ENCODE measurements at regions of chr2 and their contacts with region 1.

Region 1: GRCh38 chr2:11743846-11744553 is 2.4 kb upstream of the LPIN1 start:
- DNase-seq: peak; percentile 96
- H3K4me3 ChIP-seq: no peak overlapping the region
- H3K27ac ChIP-seq: peak overlapping the region; percentile 64
- H3K4me1 ChIP-seq: peaks cover 16% of the 10 kb centered on the region
- H3K27me3 ChIP-seq: no peaks in the 10 kb centered on the region
- CTCF ChIP-seq: no peak

Region 2: GRCh38 chr2:11598228-11598731 is 145.7 kb before region 1 on chr2:
- intact Hi-C with region 1: no loop called
- DNase-seq: no peak
- H3K4me3 ChIP-seq: no peak overlapping the region
- H3K27ac ChIP-seq: no peak overlapping the region
- H3K4me1 ChIP-seq: no peaks in the 10 kb centered on the region
- H3K27me3 ChIP-seq: no peaks in the 10 kb centered on the region
- CTCF ChIP-seq: no peak

Region 3: GRCh38 chr2:11621410-11621809 is 122.6 kb before region 1 on chr2:
- intact Hi-C with region 1: no loop called
- DNase-seq: no peak
- H3K4me3 ChIP-seq: no peak overlapping the region
- H3K27ac ChIP-seq: no peak overlapping the region
- H3K4me1 ChIP-seq: no peaks in the 10 kb centered on the region
- H3K27me3 ChIP-seq: no peaks in the 10 kb centered on the region
- CTCF ChIP-seq: no peak

Region 4: DNA sequence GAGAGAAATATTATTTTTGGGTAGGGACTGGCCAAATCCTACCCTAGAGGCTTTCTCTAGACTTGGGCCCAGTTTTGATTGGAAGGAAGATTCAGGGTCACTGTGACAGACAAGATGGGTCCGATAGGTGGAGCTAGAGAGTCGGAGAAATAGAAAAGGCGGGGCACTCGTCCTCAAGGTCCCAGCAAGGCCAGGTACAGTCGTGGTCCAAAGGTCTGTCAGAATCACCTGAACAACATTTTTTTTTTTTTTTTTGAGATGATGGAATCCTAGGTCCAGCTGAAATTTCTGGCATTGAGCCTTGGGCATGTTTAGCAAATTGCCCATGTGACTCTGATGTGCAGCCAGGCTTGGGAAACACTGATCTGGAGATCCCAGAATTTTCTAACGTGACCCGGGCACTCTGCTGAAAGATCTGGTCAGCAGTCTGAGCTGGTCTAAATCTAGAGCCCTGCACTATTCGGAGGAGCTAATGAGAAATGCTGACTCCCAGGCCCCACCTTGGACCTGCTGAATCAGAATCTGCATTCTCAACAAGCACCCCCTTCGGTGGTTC is 51.0 kb before region 1 on chr2:
- intact Hi-C with region 1: loop called (anchors 5 kb)
- DNase-seq: peak; percentile 85
- H3K4me3 ChIP-seq: no peak overlapping the region
- H3K27ac ChIP-seq: no peak overlapping the region
- H3K4me1 ChIP-seq: peaks cover 2% of the 10 kb centered on the region
- H3K27me3 ChIP-seq: no peaks in the 10 kb centered on the region
- CTCF ChIP-seq: peak; percentile 72

Region 5: GRCh38 chr2:11850082-11850481 is 106.1 kb after region 1 on chr2:
- intact Hi-C with region 1: no loop called
- DNase-seq: no peak
- H3K4me3 ChIP-seq: no peak overlapping the region
- H3K27ac ChIP-seq: no peak overlapping the region
- H3K4me1 ChIP-seq: no peaks in the 10 kb centered on the region
- H3K27me3 ChIP-seq: no peaks in the 10 kb centered on the region
- CTCF ChIP-seq: no peak